CD4-positive, alpha-beta memory T cell (primary cell): ENCODE measurements at regions of chr6 and their contacts with region 1.

Region 1: DNA sequence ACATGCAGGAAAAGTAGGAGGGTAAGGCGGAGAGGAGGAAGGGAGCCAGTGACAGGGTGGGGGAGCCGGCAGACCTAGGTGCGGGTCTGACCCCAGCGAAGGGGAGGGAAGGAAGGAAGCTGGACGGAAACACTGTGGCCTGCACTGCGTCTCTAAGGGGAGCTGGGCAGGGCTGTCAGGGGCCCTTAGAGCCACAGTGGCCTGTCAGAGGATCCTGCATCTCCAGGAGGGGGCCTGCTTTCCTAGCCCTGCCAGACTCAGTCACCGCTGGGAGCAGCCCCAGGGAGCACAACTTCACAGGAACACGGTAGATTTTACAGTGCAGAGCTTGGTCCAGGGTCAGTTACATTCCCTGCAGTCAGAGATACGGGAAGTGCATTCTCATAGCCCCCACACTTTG is 118.2 kb downstream of the PACRG start:
- DNase-seq: no peak
- H3K4me3 ChIP-seq: no peak overlapping the region
- H3K4me3 Mint-ChIP-seq: no peak overlapping the region
- H3K27ac ChIP-seq: no peak overlapping the region
- H3K27ac Mint-ChIP-seq: no peak overlapping the region
- H3K4me1 ChIP-seq: no peaks in the 10 kb centered on the region
- H3K4me1 Mint-ChIP-seq: no peaks in the 10 kb centered on the region
- H3K27me3 ChIP-seq: no peaks in the 10 kb centered on the region
- H3K27me3 Mint-ChIP-seq: peaks cover 0 to 2% of the 10 kb centered on the region in 2 donors

Region 2: GRCh38 chr6:162825597-162825996 is 20.4 kb before region 1 on chr6:
- CTCF ChIA-PET with region 1: no interaction called
- POLR2A ChIA-PET with region 1: no interaction called
- intact Hi-C with region 1: loop called (anchors 2 kb)
- DNase-seq: no peak
- H3K4me3 ChIP-seq: no peak overlapping the region
- H3K4me3 Mint-ChIP-seq: peak overlapping the region in 1 of 8 donors; percentile 15
- H3K27ac ChIP-seq: no peak overlapping the region
- H3K27ac Mint-ChIP-seq: peak overlapping the region in 1 of 7 donors; percentile 30
- H3K4me1 ChIP-seq: no peaks in the 10 kb centered on the region
- H3K4me1 Mint-ChIP-seq: peaks cover 0 to 14% (median 5%) of the 10 kb centered on the region in 4 donors
- H3K27me3 ChIP-seq: no peaks in the 10 kb centered on the region
- H3K27me3 Mint-ChIP-seq: no peaks in the 10 kb centered on the region

Region 3: DNA sequence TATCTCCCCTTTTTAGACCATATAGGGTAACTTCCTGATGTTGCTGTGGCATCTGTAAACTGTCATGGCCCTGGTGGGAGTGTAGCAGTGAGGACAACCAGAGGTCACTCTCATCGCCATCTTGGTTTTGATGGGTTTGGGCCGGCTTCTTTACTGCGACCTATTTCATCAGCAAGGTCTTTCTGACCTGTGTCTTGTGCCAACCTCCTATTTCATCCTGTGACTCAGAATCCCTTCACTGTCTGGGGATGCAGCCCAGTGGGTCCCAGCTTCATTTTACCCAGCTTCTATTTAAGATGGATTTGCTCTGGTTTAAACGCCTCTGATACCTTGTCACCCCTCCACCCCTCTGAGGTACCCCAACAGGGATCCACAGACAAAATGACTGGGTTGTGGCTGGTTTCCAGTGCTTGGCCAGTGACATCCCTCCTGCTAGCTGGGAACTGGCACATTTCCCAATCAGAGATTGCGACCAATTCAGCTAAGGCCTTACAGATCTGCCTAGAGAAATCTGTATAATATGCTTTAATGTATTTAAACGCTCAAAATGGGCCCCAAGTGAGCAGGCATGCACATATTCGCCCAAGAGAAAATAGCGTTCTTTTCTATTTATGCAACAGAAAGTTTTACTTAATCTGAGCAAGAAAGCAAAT is 253.0 kb after region 1 on chr6:
- CTCF ChIA-PET with region 1: no interaction called
- POLR2A ChIA-PET with region 1: no interaction called
- intact Hi-C with region 1: no loop called
- DNase-seq: no peak
- H3K4me3 ChIP-seq: no peak overlapping the region
- H3K4me3 Mint-ChIP-seq: no peak overlapping the region
- H3K27ac ChIP-seq: no peak overlapping the region
- H3K27ac Mint-ChIP-seq: no peak overlapping the region
- H3K4me1 ChIP-seq: no peaks in the 10 kb centered on the region
- H3K4me1 Mint-ChIP-seq: no peaks in the 10 kb centered on the region
- H3K27me3 ChIP-seq: no peaks in the 10 kb centered on the region
- H3K27me3 Mint-ChIP-seq: peaks cover 0 to 2% of the 10 kb centered on the region in 2 donors